Dorsolateral prefrontal cortex (tissue), 120 donors: ENCODE measurements at regions of chr18 and their contacts with region 1.

Region 1: DNA sequence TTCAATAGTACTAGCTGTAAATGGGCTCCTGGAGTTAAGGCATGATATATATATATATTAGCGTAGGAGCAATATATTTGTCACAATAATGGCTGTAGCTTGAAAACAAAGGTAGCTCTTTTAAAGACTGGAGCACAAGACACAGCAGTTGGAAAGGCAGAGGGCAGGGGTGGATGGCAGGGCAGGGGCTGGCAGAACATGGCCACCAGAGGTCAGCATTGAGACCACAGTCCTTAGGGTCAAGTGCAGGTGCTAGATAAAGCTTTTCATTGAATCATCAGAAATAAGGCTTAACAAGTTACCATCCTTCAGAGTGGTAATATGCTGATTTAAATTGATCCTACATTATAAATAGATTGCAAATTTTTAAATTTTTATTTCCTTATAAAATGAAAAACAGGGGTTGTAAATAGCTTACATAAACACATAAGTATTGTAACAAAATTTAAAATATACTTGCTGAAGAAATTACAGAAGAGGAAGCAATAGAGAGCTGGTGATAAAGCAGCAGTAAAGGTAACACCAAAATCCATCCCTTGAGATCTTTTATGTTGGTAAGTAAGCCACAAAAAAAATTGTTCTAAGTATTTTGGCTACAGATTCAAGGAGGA is 161.2 kb upstream of the PIEZO2 start:
- DNase-seq: peak in 1 of 10 donors; percentile 50
- H3K4me3 ChIP-seq: no peak overlapping the region
- H3K27ac ChIP-seq: no peak overlapping the region
- H3K27me3 ChIP-seq: peaks cover 0 to 6% (median 0%) of the 10 kb centered on the region in 45 donors
- CTCF ChIP-seq: peak; percentile 27 to 85 (median 68)

Region 2: DNA sequence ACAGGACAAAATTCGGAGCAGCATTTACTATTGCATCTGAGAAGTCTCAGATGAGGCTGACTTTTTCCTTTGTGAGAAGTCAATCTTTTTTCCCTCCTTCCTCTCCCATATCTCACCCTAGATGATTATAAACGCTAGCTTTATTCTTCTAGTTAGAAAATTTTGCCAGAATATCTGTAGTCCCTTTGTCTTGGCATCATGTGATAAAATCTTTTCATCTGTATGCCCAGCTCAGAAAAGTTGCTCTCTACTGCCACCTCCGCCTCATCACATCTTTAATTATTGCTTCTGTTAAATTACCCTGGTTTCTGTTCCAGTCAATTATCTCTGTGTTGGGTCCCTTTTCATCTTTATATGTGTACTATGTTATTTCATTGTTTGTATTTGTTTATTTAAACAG is 88.0 kb after region 1 on chr18:
- intact Hi-C with region 1: loop called in 1 of 2 experiments (anchors 10 kb)
- DNase-seq: no peak
- H3K4me3 ChIP-seq: no peak overlapping the region
- H3K27ac ChIP-seq: no peak overlapping the region
- H3K27me3 ChIP-seq: no peaks in the 10 kb centered on the region
- CTCF ChIP-seq: peak in 43 of 56 donors; percentile 12 to 53 (median 32)

Region 3: DNA sequence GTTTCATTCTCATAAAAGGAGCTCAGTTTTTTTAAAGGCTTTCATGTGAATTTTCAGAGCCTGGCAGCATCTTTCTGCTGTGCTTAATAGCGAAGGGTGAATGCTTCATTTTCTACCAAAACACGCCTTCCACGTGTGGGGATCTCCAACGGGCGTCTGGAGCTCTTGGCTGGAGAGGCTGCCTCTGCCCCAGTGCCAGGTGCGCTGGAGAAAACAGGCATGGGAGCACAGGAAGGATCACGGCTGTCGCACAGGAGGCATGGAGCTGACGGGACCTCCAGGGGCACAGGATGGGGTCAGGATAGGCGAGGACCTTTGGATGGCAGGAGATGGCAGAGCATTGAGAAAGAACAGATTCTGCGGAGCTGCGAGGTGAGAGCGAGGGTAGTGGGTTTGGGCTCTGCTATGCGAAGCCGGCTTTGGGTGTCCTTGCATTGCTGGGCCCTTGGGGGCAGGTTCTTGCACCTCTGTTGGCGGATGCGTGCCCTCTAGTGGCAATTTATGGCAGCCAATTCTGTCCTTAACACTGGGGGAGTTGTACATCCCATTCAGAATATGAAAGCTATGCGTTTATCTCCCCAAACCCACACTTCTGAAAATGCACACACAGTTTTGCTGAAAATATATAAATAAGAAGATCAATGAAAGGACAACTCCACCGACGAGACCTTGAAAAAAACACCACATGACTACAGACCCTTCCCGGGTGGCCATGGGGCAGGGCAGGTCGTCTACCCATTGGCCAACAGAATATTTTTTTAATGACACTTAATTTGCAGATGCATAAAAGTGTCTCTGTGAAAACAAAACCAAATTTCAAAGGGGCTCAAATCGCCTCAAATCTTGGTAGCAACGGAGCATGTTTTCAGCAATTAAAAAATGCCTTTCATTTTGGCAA is 208.5 kb after region 1 on chr18:
- intact Hi-C with region 1: loop called (anchors 2 to 10 kb)
- DNase-seq: peak in 3 of 10 donors; percentile 39 to 49 (median 42)
- H3K4me3 ChIP-seq: no peak overlapping the region
- H3K27ac ChIP-seq: no peak overlapping the region
- H3K27me3 ChIP-seq: no peaks in the 10 kb centered on the region
- CTCF ChIP-seq: peak in 54 of 56 donors; percentile 18 to 70 (median 54)